AG04450 (cell line): ENCODE measurements at regions of chr16 and their contacts with region 1.

Region 1: GRCh38 chr16:14249291-14250032 is 178.3 kb downstream of the MRTFB start:
- DNase-seq: no peak
- H3K4me3 ChIP-seq: no peak overlapping the region
- H3K27ac ChIP-seq: no peak overlapping the region
- H3K27me3 ChIP-seq: no peaks in the 10 kb centered on the region
- CTCF ChIP-seq: peak; percentile 96

Region 2: DNA sequence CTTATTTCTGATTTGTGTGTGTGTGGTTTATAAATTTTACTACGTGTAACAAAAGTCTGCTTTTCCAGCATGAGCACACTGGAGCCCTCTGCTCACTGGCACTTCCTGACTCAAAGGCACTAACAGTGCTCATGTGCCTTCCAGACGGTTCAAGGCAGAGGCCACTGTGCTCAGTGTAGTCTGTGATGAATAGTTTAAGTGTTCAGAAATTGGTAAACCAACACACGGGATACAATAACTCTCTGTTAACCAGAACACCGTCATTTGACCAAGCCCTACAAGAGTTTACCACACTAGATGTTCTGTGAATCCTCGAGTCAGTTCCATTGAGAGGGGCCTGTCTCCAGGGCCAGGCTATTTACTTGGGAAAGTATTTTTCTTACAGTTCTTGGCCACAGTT is 13.5 kb after region 1 on chr16:
- CTCF ChIA-PET with region 1: interaction called, 20 read pairs
- POLR2A ChIA-PET with region 1: no interaction called
- DNase-seq: no peak
- H3K4me3 ChIP-seq: no peak overlapping the region
- H3K27ac ChIP-seq: no peak overlapping the region
- H3K27me3 ChIP-seq: no peaks in the 10 kb centered on the region
- CTCF ChIP-seq: no peak

Region 3: DNA sequence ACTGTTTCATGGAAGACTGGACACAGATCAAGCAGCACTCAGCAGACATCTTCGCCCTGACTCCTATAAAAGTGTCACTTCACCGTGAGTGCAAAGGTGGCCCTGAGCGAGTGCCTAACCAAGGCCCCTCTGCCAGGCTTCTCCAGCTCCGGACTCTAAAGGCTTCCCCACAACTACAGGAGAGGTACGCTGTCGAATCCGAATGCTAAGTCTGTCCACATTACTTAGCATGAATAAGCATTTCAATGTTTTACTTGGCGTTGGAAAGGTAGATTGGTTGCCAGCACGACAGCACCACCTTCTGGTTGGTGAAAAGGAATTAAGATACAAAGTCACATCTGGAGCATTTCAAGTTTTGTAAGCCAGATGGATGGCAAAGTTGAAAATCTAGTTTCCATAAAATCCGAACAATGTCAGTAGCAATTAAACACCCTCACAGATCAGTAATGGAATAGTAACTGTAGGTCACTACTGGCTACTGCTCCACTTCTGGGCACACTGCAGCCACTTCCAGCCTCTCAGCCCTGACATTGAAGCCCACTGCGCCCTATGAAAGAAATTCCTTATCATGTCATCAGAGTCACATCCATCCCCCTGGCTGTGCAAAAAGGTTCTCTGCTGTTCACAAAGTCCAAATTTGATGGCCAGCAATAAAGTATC is 279.7 kb after region 1 on chr16:
- CTCF ChIA-PET with region 1: interaction called, 37 read pairs
- POLR2A ChIA-PET with region 1: no interaction called
- DNase-seq: peak; percentile 83
- H3K4me3 ChIP-seq: peak overlapping the region; percentile 17; the same call in 1 of the 2 replicates
- H3K27ac ChIP-seq: peak overlapping the region; percentile 73
- H3K27me3 ChIP-seq: no peaks in the 10 kb centered on the region
- CTCF ChIP-seq: peak; percentile 77